ENCODE measurements at regions of chr1 and their contacts with region 1.

Region 1: DNA sequence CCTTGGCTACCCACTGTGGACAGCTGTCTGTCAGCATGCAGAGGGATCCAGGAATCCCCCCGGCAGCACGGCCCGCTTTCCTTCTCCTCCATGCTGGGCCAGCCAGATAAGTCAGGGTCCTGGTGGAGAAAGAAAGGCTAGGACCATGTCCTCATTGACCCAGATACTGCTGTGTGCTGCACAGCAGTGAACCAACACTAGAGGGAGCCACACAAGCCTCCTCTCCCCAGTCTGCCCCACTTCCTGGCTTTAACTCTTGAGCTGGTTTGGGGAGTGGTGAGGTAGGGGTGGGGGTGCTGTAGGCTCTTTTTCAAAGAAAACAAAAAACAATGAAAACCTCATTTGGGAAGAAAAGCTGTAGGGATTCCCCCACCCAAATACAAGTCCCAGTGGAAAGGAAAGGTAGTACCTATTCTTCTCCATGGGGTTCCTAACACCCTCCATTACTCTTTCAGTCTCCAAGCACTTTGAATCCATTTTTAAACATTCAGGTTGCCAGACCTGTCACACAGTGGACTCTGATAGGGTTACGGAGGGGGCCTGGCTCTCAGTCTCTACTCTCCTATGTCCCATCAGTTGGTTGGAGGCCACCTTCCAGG is 84.9 kb upstream of the CD1D start:
- DNase-seq: peak; percentile 70
- ATAC-seq: peak; percentile 84
- H3K4me3 Mint-ChIP-seq: no peak overlapping the region
- H3K27ac Mint-ChIP-seq: no peak overlapping the region
- H3K4me1 Mint-ChIP-seq: peaks cover 51% of the 10 kb centered on the region
- H3K27me3 Mint-ChIP-seq: no peaks in the 10 kb centered on the region
- CTCF ChIP-seq: peak; percentile 75

Region 2: GRCh38 chr1:157978586-157979403 is 117.0 kb before region 1 on chr1:
- CTCF ChIA-PET with region 1: interaction called, 36 read pairs
- POLR2A ChIA-PET with region 1: no interaction called
- DNase-seq: peak; percentile 78
- ATAC-seq: peak; percentile 89
- H3K4me3 Mint-ChIP-seq: peak overlapping the region; percentile 49
- H3K27ac Mint-ChIP-seq: peak overlapping the region; percentile 31; the same call in 1 of the 2 replicates
- H3K4me1 Mint-ChIP-seq: peaks cover 60% of the 10 kb centered on the region
- H3K27me3 Mint-ChIP-seq: no peaks in the 10 kb centered on the region; the same call in 1 of the 2 replicates
- CTCF ChIP-seq: no peak

Region 3: GRCh38 chr1:158035976-158036583 is 59.8 kb before region 1 on chr1:
- CTCF ChIA-PET with region 1: interaction called, 15 read pairs
- POLR2A ChIA-PET with region 1: no interaction called
- DNase-seq: no peak
- ATAC-seq: no peak
- H3K4me3 Mint-ChIP-seq: no peak overlapping the region
- H3K27ac Mint-ChIP-seq: no peak overlapping the region
- H3K4me1 Mint-ChIP-seq: peaks cover 47% of the 10 kb centered on the region
- H3K27me3 Mint-ChIP-seq: no peaks in the 10 kb centered on the region
- CTCF ChIP-seq: peak; percentile 79

Region 4: DNA sequence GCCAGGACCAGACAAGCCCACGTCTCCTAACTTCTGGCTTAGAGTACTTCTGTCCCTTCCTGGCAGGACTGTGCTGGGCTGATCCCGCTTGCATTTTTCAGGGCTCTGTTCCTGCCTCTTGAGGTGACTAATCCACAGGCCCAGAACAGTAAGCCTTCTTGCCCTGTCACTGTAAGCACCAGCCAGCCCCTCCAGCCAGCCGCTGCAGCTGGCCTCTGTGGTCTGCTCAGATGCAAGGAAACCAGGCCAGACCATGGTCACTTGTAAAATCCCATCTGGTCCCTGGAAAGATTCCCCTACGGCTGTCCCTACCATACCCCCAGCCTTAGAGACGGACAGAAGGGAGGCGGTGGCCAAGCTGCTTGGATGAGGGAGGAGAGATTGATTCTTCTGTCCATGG is 28.2 kb before region 1 on chr1:
- CTCF ChIA-PET with region 1: interaction called, 12 read pairs
- POLR2A ChIA-PET with region 1: no interaction called
- DNase-seq: no peak
- ATAC-seq: no peak
- H3K4me3 Mint-ChIP-seq: no peak overlapping the region
- H3K27ac Mint-ChIP-seq: no peak overlapping the region
- H3K4me1 Mint-ChIP-seq: peaks cover 58% of the 10 kb centered on the region
- H3K27me3 Mint-ChIP-seq: no peaks in the 10 kb centered on the region
- CTCF ChIP-seq: no peak

Region 5: DNA sequence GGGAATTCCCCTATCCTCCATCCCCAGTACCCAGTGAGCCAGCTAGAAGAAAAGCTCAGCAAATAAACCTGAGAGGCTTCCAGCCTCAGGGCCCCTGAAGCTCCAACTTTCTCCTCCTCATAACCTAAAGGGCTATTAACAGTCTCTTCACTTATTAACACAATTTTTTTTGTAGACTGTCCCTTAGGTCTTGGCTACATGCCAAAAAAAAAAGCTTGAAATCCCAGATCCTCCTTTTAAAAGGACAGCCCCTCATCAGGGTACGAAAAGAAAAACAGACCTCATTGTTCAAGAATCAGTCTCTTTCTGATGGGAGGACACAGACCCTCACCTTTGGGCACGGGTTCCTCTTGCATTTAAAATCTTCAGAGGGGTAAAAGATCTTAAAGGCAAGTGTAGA is 12.1 kb after region 1 on chr1:
- CTCF ChIA-PET with region 1: interaction called, 115 read pairs
- POLR2A ChIA-PET with region 1: interaction called, 3 read pairs
- DNase-seq: no peak
- ATAC-seq: no peak
- H3K4me3 Mint-ChIP-seq: no peak overlapping the region
- H3K27ac Mint-ChIP-seq: no peak overlapping the region
- H3K4me1 Mint-ChIP-seq: peaks cover 69% of the 10 kb centered on the region
- H3K27me3 Mint-ChIP-seq: peaks cover 24% of the 10 kb centered on the region
- CTCF ChIP-seq: no peak

Region 6: DNA sequence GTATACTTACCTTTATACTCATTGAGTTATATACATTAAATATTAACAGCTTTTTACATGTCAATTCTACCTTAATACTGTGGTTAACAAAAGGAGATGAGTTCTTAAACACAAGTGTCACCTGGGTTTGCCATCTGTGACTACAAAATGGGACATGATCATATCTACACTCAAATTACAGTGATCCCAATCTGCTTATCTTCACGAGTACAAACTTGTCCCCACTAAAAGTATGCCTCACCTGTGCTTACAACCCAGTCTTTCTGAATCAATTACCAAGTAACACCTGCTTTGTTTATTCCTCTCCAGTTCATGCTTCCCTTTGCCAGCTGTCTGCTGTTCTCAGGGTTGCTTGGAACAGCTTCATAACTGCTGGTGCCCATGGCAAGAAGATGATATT is 266.6 kb after region 1 on chr1:
- CTCF ChIA-PET with region 1: no interaction called
- POLR2A ChIA-PET with region 1: no interaction called
- DNase-seq: no peak
- ATAC-seq: no peak
- H3K4me3 Mint-ChIP-seq: no peak overlapping the region
- H3K27ac Mint-ChIP-seq: no peak overlapping the region
- H3K4me1 Mint-ChIP-seq: peaks cover 2% of the 10 kb centered on the region
- H3K27me3 Mint-ChIP-seq: no peaks in the 10 kb centered on the region
- CTCF ChIP-seq: no peak

Measured in WTC11 (cell line).